CD8-positive, alpha-beta memory T cell (primary cell): ENCODE measurements at regions of chr1 and their contacts with region 1.

Region 1: GRCh38 chr1:27154991-27155781 is at the start of gene SLC9A1:
- DNase-seq: peak; percentile 89 to 95 (median 91)
- H3K4me3 ChIP-seq: peak within 1 kb of the TSS; percentile 64
- H3K4me3 Mint-ChIP-seq: peak within 1 kb of the TSS; percentile 85 to 95 (median 89)
- H3K27ac ChIP-seq: peak within 1 kb of the TSS; percentile 97
- H3K27ac Mint-ChIP-seq: peak within 1 kb of the TSS; percentile 96 to 100 (median 99)
- H3K4me1 ChIP-seq: peaks cover 34% of the 10 kb centered on the region
- H3K4me1 Mint-ChIP-seq: peaks cover 44 to 52% (median 46%) of the 10 kb centered on the region in 3 donors
- H3K27me3 ChIP-seq: no peaks in the 10 kb centered on the region
- H3K27me3 Mint-ChIP-seq: peaks cover 0 to 3% of the 10 kb centered on the region in 2 donors
- total RNA-seq, gene SLC9A1: 23.9 to 24.8 TPM

Region 2: GRCh38 chr1:27057801-27058625 is 97.2 kb before region 1 on chr1:
- CTCF ChIA-PET with region 1: no interaction called
- POLR2A ChIA-PET with region 1: no interaction called
- DNase-seq: no peak
- H3K4me3 ChIP-seq: no peak overlapping the region
- H3K4me3 Mint-ChIP-seq: no peak overlapping the region
- H3K27ac ChIP-seq: no peak overlapping the region
- H3K27ac Mint-ChIP-seq: peak overlapping the region in 1 of 8 donors; percentile 57
- H3K4me1 ChIP-seq: no peaks in the 10 kb centered on the region
- H3K4me1 Mint-ChIP-seq: no peaks in the 10 kb centered on the region
- H3K27me3 ChIP-seq: no peaks in the 10 kb centered on the region
- H3K27me3 Mint-ChIP-seq: peaks cover 0 to 6% of the 10 kb centered on the region in 2 donors

Region 3: GRCh38 chr1:27136998-27137542 is 18.1 kb before region 1 on chr1:
- CTCF ChIA-PET with region 1: interaction called, 31 read pairs
- POLR2A ChIA-PET with region 1: interaction called, 62 read pairs
- DNase-seq: peak; percentile 54 to 88 (median 70)
- H3K4me3 ChIP-seq: peak overlapping the region; percentile 56
- H3K4me3 Mint-ChIP-seq: peak overlapping the region; percentile 65 to 95 (median 90)
- H3K27ac ChIP-seq: peak overlapping the region; percentile 82
- H3K27ac Mint-ChIP-seq: peak overlapping the region; percentile 98 to 100 (median 100)
- H3K4me1 ChIP-seq: peaks cover 41% of the 10 kb centered on the region
- H3K4me1 Mint-ChIP-seq: peaks cover 40 to 44% (median 43%) of the 10 kb centered on the region in 3 donors
- H3K27me3 ChIP-seq: no peaks in the 10 kb centered on the region
- H3K27me3 Mint-ChIP-seq: no peaks in the 10 kb centered on the region

Region 4: DNA sequence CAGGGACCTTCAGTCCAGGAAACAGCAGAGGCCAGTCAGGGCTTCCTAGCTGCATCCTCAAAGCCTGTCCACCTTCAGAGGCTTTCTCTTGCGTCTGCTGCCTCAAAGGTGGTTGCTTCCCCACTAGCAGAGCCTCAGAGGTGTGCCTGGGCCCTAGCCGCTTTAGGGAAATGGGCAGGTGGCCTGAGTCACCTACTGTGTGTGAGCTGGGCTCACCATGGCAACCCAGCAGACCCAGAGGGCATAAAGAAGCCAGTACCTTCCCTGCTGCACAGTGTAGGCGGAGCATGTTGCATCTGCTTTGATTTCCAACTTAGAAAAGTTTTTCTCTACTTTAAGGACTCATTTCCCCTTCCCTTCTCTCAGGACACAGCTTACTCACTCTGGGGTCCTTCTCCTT is 12.7 kb before region 1 on chr1:
- CTCF ChIA-PET with region 1: interaction called, 31 read pairs
- POLR2A ChIA-PET with region 1: interaction called, 62 read pairs
- DNase-seq: peak in 1 of 5 donors; percentile 20
- H3K4me3 ChIP-seq: no peak overlapping the region
- H3K4me3 Mint-ChIP-seq: no peak overlapping the region
- H3K27ac ChIP-seq: no peak overlapping the region
- H3K27ac Mint-ChIP-seq: peak overlapping the region in 5 of 8 donors; percentile 22 to 80 (median 56)
- H3K4me1 ChIP-seq: peaks cover 35% of the 10 kb centered on the region
- H3K4me1 Mint-ChIP-seq: peaks cover 31 to 42% (median 33%) of the 10 kb centered on the region in 3 donors
- H3K27me3 ChIP-seq: no peaks in the 10 kb centered on the region
- H3K27me3 Mint-ChIP-seq: peaks cover 0 to 2% of the 10 kb centered on the region in 2 donors